ENCODE measurements at regions of chr1 and their contacts with region 1.

Region 1: DNA sequence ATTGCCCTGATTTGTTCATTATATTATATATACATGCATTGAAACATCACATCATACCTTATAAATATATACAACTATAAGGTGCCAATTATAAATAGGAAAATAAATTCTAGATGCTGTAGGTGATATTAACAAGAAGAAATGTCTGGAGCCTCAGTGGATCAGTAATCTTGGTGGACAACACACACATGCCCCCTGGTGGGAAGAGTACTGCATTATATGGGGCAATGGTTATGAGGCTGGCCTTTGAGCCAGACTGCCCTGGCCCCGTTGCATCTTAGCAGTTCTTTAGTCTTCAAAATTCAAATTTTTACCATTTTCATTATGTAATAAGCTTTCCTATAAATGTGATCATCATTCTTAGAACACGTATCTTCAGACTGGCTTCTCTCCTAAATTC is 335.0 kb upstream of the GREM2 start:
- DNase-seq: peak; percentile 9
- H3K4me3 ChIP-seq: no peak overlapping the region
- CTCF ChIP-seq: peak; percentile 68

Region 2: DNA sequence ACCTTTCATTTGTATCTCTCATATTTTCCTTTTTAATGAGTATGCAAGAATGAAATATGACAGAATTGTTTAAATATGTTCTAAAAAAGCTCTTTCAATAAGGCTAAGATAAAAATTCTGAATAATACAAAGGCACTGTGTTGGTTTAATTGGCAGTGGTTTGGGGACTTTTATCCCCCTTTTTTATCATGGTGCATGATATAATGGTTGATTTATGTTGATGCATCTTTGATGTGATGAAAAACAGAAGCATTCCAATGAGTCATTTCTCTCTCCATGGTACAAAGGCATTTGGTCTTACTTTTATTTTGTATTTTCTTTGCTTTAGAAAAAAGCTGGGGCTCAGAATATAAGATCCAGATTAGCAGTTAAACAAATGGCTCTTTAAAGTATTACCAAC is 207.8 kb before region 1 on chr1:
- CTCF ChIA-PET with region 1: interaction called, 192 read pairs
- POLR2A ChIA-PET with region 1: no interaction called
- DNase-seq: no peak
- H3K4me3 ChIP-seq: no peak overlapping the region
- CTCF ChIP-seq: no peak